ENCODE measurements at regions of chr15 and their contacts with region 1.

Region 1: DNA sequence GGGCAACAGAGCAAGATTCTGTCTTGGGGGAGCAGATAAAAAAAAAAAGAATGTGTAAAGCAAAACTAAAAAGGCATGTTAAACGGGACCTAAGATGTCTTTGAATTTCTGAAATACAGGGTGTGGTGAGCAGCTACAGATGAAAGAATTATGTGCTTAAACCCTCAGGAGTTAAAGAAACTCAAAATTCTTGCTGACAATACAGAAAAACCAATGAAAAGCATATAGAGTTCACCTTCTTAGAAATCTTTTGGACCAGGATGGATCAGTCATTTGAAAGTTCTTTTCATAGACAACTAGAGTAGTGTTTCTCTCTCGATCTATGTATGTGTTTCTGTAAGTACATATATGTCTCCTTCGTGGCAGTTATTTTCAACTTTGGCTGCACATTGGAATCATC is 31.4 kb downstream of the TUBGCP4 start:
- DNase-seq: no peak
- ATAC-seq: no peak
- H3K4me3 ChIP-seq: no peak overlapping the region
- H3K27ac ChIP-seq: no peak overlapping the region
- H3K4me1 ChIP-seq: peaks cover 0 to 5% (median 0%) of the 10 kb centered on the region in 12 donors
- H3K27me3 ChIP-seq: no peaks in the 10 kb centered on the region
- CTCF ChIP-seq: no peak
- POLR2A ChIP-seq: no peak

Region 2: DNA sequence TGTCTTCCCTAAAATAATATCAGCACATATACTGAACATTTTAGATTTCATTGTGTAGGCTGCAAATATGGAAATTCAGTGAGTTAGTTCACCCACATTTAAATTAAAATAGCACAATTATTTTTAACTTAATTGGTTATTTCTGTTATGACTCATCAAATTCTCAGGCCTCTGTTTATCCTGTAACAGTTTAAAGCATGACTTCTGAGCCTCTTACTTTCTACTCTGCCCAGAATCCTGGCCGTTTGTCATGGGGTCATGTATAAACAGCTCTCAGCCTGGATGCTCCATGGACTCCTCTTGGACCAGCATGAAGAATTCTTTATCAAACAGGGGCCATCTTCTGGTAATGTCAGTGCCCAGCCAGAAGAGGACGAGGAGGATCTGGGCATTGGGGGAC is 19.2 kb before region 1 on chr15:
- intact Hi-C with region 1: loop called in 1 of 10 experiments (anchors 2 kb)
- DNase-seq: no peak
- ATAC-seq: no peak
- H3K4me3 ChIP-seq: no peak overlapping the region
- H3K27ac ChIP-seq: no peak overlapping the region
- H3K4me1 ChIP-seq: no peaks in the 10 kb centered on the region
- H3K27me3 ChIP-seq: no peaks in the 10 kb centered on the region
- CTCF ChIP-seq: no peak
- POLR2A ChIP-seq: no peak